Esophagus muscularis mucosa (tissue), 4 donors: ENCODE measurements at regions of chr1 and their contacts with region 1.

Region 1: DNA sequence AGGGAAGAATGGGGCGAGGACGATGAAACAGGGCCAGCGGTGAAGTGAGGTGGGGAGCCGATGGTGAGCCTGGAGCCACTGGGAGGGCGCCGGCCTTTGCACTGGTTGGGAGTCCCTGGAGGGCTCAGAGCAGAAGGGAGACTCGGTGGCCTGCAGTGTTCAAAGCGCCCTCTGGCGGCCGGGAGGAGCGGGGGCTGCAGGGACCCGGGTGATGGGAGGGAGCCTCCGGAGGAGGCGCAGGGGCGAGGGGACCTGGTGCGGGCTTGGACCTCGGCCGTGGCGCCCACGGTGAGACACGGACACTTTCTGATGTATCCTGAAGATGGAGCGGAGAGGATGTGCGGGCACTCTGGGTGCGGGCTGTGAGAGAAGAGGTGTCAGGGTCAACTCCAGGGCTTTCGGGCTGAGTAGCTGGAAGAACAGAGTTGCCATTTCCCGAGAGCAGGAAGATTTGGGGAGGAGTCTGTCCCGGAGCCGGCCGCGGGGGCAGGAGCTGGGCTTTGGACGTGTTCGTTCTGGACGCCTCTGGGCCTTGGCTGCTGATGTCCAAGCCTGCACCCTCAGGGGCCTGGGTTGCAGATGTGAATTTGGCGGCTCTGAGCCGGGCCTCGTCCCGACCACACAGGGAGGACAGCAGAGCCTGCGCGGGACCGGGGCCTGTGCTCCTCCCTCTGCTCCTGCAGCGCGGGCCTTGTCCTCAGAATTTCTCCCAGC is 29.7 kb downstream of the HEYL start:
- DNase-seq: no peak
- H3K4me3 ChIP-seq: peak overlapping the region in 1 of 4 donors; percentile 33
- H3K27ac ChIP-seq: peak overlapping the region in 1 of 4 donors; percentile 34
- H3K4me1 ChIP-seq: peaks cover 6 to 14% (median 7%) of the 10 kb centered on the region in 4 donors
- H3K27me3 ChIP-seq: peaks cover 0 to 36% (median 0%) of the 10 kb centered on the region in 4 donors
- CTCF ChIP-seq: peak in 2 of 3 experiments; percentile 55 to 57
- EP300 ChIP-seq: no peak
- POLR2A ChIP-seq: no peak

Region 2: DNA sequence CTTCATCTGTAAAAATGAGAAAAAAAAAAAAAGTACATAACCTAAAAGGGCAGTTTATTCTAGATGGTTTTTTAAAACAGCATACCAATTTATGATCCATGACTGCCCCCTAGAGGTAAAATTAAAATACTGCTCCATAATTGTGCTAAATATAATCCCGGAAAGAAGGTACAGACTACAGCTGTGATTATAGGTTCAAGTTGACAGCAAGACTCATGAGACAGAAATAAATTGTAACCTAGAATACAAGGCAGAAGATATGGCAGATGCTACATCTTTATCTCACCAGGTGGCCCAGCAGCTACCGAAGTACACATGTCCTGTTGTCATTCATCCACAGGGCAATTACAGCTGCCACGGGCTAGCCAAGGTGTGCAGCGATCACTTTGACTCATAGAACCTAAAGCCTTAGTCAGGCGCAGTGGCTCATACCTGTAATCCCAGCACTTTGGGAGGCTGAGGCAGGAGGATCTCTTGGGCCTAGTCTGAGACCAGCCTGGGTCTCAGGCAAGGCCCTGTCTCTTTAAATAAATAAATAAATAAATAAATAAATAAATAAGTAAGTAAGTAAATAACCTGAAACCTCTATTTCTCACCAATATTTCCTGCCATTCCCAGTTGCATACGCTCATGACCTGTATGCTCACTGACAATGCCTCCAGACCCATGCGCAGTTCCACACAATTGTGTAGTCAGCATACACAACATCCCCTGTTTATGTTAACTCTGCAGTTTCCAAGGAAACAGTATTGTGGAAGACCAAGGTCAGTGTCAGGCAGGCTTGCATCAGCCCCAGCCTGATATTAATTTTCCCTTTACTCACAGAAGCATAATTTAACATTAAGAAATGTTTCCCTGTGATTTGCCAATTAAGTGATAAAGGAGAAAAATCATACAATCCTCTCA is 110.6 kb after region 1 on chr1:
- intact Hi-C with region 1: loop called (anchors 2 kb)
- DNase-seq: no peak
- H3K4me3 ChIP-seq: no peak overlapping the region
- H3K27ac ChIP-seq: no peak overlapping the region
- H3K4me1 ChIP-seq: peaks cover 0 to 3% (median 0%) of the 10 kb centered on the region in 4 donors
- H3K27me3 ChIP-seq: peaks cover 0 to 35% (median 0%) of the 10 kb centered on the region in 4 donors
- CTCF ChIP-seq: peak; percentile 66 to 79 (median 76)
- EP300 ChIP-seq: no peak
- POLR2A ChIP-seq: no peak